PC-3 (cell line): ENCODE measurements at regions of chr4 and their contacts with region 1.

Region 1: GRCh38 chr4:187209921-187210613 is 486.4 kb upstream of the FAT1 start:
- DNase-seq: peak; percentile 83
- ATAC-seq: peak; percentile 97
- H3K4me3 ChIP-seq: no peak overlapping the region
- H3K27ac ChIP-seq: peak overlapping the region; percentile 89
- H3K4me1 ChIP-seq: peaks cover 18% of the 10 kb centered on the region
- H3K27me3 ChIP-seq: no peaks in the 10 kb centered on the region
- CTCF ChIP-seq: no peak

Region 2: DNA sequence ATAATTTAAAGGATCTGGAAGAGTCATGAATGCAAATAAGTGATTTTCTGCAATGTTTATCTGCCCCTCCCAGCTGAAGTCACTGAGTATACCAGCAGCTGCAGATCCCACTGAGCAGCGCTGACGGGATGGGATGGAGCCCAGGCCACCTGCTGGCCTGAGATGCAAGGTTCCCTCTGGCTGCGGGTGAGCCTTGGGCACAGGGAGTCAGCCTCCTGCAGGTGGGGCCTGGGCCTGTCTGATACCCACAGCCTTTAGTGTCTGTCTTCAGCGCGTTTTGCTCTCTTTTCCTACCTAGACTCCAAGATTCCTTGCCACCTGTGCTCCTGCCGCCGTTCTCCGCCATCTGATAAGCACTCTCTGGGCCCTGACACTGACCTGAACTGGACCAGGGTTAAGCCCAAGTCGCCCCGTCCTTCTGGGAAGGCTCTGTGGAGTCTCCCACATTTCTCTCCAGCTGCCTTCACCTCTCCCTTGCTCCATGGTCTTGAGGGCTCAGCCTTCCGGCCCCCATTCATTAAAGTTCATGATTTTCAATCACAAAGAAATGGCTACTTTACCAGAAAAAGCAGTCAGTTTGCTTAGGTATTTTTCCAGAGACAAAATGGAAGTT is 263.3 kb before region 1 on chr4:
- CTCF ChIA-PET with region 1: no interaction called
- POLR2A ChIA-PET with region 1: no interaction called
- intact Hi-C with region 1: loop called (anchors 10 kb)
- DNase-seq: peak; percentile 81
- ATAC-seq: peak; percentile 100
- H3K4me3 ChIP-seq: no peak overlapping the region
- H3K27ac ChIP-seq: no peak overlapping the region
- H3K4me1 ChIP-seq: no peaks in the 10 kb centered on the region
- H3K27me3 ChIP-seq: no peaks in the 10 kb centered on the region
- CTCF ChIP-seq: peak; percentile 75

Region 3: GRCh38 chr4:187193141-187193540 is 16.9 kb before region 1 on chr4:
- CTCF ChIA-PET with region 1: no interaction called
- POLR2A ChIA-PET with region 1: no interaction called
- intact Hi-C with region 1: no loop called
- DNase-seq: no peak
- ATAC-seq: no peak
- H3K4me3 ChIP-seq: no peak overlapping the region
- H3K27ac ChIP-seq: no peak overlapping the region
- H3K4me1 ChIP-seq: no peaks in the 10 kb centered on the region
- H3K27me3 ChIP-seq: no peaks in the 10 kb centered on the region
- CTCF ChIP-seq: no peak

Region 4: DNA sequence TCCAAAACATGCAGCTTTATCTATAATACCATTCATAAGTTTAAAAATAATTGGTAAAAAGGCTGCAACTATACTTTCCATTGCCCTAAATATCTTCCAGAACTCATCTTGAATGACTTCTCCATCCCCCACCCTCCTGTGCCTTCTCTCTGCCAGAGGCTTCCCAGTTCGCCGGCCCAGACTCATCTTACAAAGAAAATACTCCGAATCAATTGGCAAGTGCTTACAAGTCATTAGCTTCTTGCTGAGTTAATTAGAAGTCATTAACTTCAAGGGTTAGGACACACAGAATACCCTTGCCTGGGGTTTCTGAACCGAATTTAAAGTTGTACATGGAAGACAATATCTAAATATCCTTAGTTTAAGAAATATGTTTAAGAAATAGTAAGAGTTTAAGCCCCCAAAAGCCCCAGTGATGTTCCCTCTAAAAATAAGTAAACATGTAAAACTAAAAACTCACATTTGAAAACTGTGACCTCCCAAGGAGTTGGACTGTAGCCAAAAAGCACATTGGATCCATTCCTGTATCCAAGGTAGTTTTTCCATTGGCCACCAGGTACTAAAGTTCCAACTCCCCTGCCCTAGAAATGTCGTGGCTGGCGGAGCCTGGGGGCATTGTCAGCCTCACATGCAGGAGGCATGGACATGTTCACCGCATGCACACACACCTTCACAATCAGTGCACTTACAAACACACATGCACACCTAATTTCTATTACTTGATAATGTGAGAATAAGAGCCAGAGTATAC is 48.8 kb after region 1 on chr4:
- CTCF ChIA-PET with region 1: no interaction called
- POLR2A ChIA-PET with region 1: no interaction called
- intact Hi-C with region 1: loop called (anchors 1 kb)
- DNase-seq: no peak
- ATAC-seq: no peak
- H3K4me3 ChIP-seq: no peak overlapping the region
- H3K27ac ChIP-seq: no peak overlapping the region
- H3K4me1 ChIP-seq: peaks cover 9% of the 10 kb centered on the region
- H3K27me3 ChIP-seq: no peaks in the 10 kb centered on the region
- CTCF ChIP-seq: no peak

Region 5: DNA sequence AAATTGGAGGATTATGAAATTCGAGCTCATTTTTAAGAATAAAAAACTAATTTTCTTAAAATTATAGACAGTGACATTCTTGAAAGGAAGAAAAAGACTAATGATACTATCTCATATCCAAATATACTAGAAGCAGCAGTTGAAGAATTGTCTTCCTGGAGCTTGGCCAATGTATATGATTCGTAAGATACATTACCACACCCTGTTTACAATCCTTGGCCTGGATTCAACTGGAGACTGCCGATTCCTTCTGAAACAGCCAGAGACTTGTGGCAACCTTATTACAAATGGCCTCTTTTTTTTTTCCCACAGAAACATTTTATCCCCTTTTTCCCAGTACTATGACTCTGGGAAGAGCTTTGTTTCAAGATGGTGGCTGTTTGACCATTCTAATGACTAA is 84.8 kb after region 1 on chr4:
- CTCF ChIA-PET with region 1: no interaction called
- POLR2A ChIA-PET with region 1: no interaction called
- intact Hi-C with region 1: no loop called
- DNase-seq: peak; percentile 91
- ATAC-seq: peak; percentile 61
- H3K4me3 ChIP-seq: no peak overlapping the region
- H3K27ac ChIP-seq: peak overlapping the region; percentile 64
- H3K4me1 ChIP-seq: peaks cover 13% of the 10 kb centered on the region; the same call in 1 of the 2 replicates
- H3K27me3 ChIP-seq: no peaks in the 10 kb centered on the region
- CTCF ChIP-seq: no peak

Region 6: GRCh38 chr4:187309456-187309855 is 99.4 kb after region 1 on chr4:
- CTCF ChIA-PET with region 1: no interaction called
- POLR2A ChIA-PET with region 1: no interaction called
- intact Hi-C with region 1: loop called (anchors 5 kb)
- DNase-seq: peak; percentile 80
- ATAC-seq: peak; percentile 87
- H3K4me3 ChIP-seq: no peak overlapping the region
- H3K27ac ChIP-seq: peak overlapping the region; percentile 52
- H3K4me1 ChIP-seq: peaks cover 38% of the 10 kb centered on the region
- H3K27me3 ChIP-seq: no peaks in the 10 kb centered on the region
- CTCF ChIP-seq: no peak